ENCODE measurements at regions of chr3 and their contacts with region 1.

Region 1: DNA sequence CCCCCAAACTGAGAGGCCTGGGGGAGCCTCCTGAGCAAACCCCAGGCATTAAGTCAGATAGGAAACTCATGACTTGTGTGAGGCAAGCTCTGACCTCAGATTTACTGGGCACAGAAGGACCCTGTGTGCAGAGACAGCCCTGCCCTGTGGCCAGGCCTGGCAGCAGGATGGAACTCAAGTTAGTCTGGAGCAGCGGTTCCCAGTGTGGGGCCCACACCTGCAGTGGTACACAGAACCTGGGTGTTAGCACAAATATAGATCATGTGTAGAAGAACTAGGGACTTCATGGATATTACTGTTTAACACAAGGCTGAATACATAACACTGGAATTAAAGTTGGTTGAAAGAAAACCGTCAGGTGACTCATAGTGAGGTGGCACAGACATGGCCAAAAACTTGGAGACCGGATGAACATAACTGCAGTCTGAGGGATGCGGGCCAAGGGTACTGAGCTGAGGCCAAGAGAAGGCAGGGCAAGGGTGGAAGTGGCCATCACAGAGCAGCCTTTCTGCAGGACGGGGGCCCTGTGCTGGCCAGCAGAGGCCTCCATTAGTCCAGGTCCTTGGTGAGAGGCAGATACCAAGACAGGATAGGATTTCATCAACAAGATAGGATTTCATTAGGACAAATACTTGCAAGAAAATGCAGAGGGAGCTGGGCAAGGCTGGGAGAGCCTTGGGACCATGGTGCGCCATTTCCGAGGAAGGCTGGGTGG is 40.9 kb downstream of the IRAK2 start:
- DNase-seq: no peak
- H3K4me3 ChIP-seq: no peak overlapping the region
- H3K27ac ChIP-seq: no peak overlapping the region
- H3K4me1 ChIP-seq: no peaks in the 10 kb centered on the region
- H3K27me3 ChIP-seq: no peaks in the 10 kb centered on the region
- CTCF ChIP-seq: no peak

Region 2: GRCh38 chr3:10244009-10244408 is 38.4 kb after region 1 on chr3:
- CTCF ChIA-PET with region 1: no interaction called
- POLR2A ChIA-PET with region 1: no interaction called
- intact Hi-C with region 1: loop called (anchors 2 kb)
- DNase-seq: no peak
- H3K4me3 ChIP-seq: no peak overlapping the region
- H3K27ac ChIP-seq: no peak overlapping the region
- H3K4me1 ChIP-seq: peaks cover 5% of the 10 kb centered on the region
- H3K27me3 ChIP-seq: no peaks in the 10 kb centered on the region
- CTCF ChIP-seq: no peak